ENCODE measurements at regions of chr16 and their contacts with region 1.

Region 1: GRCh38 chr16:17026600-17027242 is 444.0 kb downstream of the XYLT1 start:
- DNase-seq: peak; percentile 2
- H3K4me3 Mint-ChIP-seq: no peak overlapping the region
- H3K27ac Mint-ChIP-seq: peak overlapping the region; percentile 76
- H3K4me1 Mint-ChIP-seq: peaks cover 30% of the 10 kb centered on the region
- H3K27me3 Mint-ChIP-seq: no peaks in the 10 kb centered on the region

Region 2: GRCh38 chr16:16904601-16905000 is 122.1 kb before region 1 on chr16:
- intact Hi-C with region 1: no loop called
- DNase-seq: no peak
- H3K4me3 Mint-ChIP-seq: no peak overlapping the region
- H3K27ac Mint-ChIP-seq: no peak overlapping the region
- H3K4me1 Mint-ChIP-seq: no peaks in the 10 kb centered on the region
- H3K27me3 Mint-ChIP-seq: no peaks in the 10 kb centered on the region

Region 3: DNA sequence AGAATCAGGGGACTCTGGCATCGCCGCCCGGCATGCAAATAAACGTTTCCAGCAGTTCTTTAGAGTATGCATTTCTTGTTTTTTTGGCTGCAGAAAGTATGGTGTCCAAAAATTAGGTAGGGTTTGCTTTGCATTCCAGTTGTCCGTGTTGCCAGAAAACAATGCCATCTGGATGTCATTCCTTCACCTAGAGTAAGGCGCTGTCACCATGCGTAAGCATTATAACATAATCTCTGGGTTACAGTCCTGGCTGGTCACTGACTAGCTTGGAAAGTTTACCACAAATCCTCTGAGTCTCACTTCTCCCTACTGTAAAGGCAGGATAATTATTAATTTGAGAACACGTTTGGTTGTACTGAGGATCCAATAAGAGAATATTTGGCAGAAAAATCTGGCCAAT is 13.7 kb before region 1 on chr16:
- intact Hi-C with region 1: loop called (anchors 1 kb)
- DNase-seq: no peak
- H3K4me3 Mint-ChIP-seq: peak overlapping the region; percentile 70
- H3K27ac Mint-ChIP-seq: no peak overlapping the region
- H3K4me1 Mint-ChIP-seq: peaks cover 10% of the 10 kb centered on the region
- H3K27me3 Mint-ChIP-seq: peaks cover 11% of the 10 kb centered on the region

Region 4: GRCh38 chr16:17070882-17071592 is 44.3 kb after region 1 on chr16:
- intact Hi-C with region 1: loop called (anchors 1 kb)
- DNase-seq: peak; percentile 5
- H3K4me3 Mint-ChIP-seq: peak overlapping the region; percentile 50
- H3K27ac Mint-ChIP-seq: peak overlapping the region; percentile 20
- H3K4me1 Mint-ChIP-seq: peaks cover 8% of the 10 kb centered on the region
- H3K27me3 Mint-ChIP-seq: peaks cover 9% of the 10 kb centered on the region